HCT116 (cell line): ENCODE measurements at regions of chr17 and their contacts with region 1.

Region 1: GRCh38 chr17:73311781-73312641 is at the start of gene CDC42EP4:
- DNase-seq: peak; percentile 89
- ATAC-seq: peak; percentile 82
- H3K4me3 ChIP-seq: peak within 1 kb of the TSS; percentile 97 to 100
- H3K27ac ChIP-seq: peak within 1 kb of the TSS; percentile 88
- H3K4me1 ChIP-seq: peaks cover 33 to 45% of the 10 kb centered on the region in 2 experiments
- H3K27me3 ChIP-seq: no peaks in the 10 kb centered on the region
- CTCF ChIP-seq: no peak
- POLR2A ChIP-seq: peak; percentile 60
- RAD21 ChIP-seq: no peak
- total RNA-seq, gene CDC42EP4: 54.9 TPM

Region 2: GRCh38 chr17:72863526-72864211 is 448.3 kb before region 1 on chr17:
- CTCF ChIA-PET with region 1: no interaction called
- POLR2A ChIA-PET with region 1: no interaction called
- RAD21 ChIA-PET with region 1: no interaction called
- intact Hi-C with region 1: no loop called
- DNase-seq: no peak
- ATAC-seq: no peak
- H3K4me3 ChIP-seq: no peak overlapping the region
- H3K27ac ChIP-seq: no peak overlapping the region
- H3K4me1 ChIP-seq: 0 out of 4 replicates have a peak, but pooled peaks cover 0 to 4% of the 10 kb centered on the region in 2 experiments
- H3K27me3 ChIP-seq: no peaks in the 10 kb centered on the region
- CTCF ChIP-seq: no peak
- POLR2A ChIP-seq: no peak
- RAD21 ChIP-seq: no peak

Region 3: GRCh38 chr17:73340093-73340596 is 28.1 kb after region 1 on chr17:
- CTCF ChIA-PET with region 1: interaction called, 3 read pairs
- POLR2A ChIA-PET with region 1: interaction called, 4 read pairs
- RAD21 ChIA-PET with region 1: no interaction called
- intact Hi-C with region 1: loop called (anchors 2 kb)
- DNase-seq: peak; percentile 71
- ATAC-seq: peak; percentile 88
- H3K4me3 ChIP-seq: peak overlapping the region in 1 of 2 experiments; percentile 3; a peak in 1 of 4 replicates
- H3K27ac ChIP-seq: no peak overlapping the region
- H3K4me1 ChIP-seq: peaks cover 11 to 43% of the 10 kb centered on the region in 2 experiments
- H3K27me3 ChIP-seq: no peaks in the 10 kb centered on the region
- CTCF ChIP-seq: peak in 2 of 3 experiments; percentile 55 to 63; a peak in 4 of 6 replicates
- POLR2A ChIP-seq: no peak
- RAD21 ChIP-seq: no peak